ENCODE measurements at regions of chr13 and their contacts with region 1.

Region 1: DNA sequence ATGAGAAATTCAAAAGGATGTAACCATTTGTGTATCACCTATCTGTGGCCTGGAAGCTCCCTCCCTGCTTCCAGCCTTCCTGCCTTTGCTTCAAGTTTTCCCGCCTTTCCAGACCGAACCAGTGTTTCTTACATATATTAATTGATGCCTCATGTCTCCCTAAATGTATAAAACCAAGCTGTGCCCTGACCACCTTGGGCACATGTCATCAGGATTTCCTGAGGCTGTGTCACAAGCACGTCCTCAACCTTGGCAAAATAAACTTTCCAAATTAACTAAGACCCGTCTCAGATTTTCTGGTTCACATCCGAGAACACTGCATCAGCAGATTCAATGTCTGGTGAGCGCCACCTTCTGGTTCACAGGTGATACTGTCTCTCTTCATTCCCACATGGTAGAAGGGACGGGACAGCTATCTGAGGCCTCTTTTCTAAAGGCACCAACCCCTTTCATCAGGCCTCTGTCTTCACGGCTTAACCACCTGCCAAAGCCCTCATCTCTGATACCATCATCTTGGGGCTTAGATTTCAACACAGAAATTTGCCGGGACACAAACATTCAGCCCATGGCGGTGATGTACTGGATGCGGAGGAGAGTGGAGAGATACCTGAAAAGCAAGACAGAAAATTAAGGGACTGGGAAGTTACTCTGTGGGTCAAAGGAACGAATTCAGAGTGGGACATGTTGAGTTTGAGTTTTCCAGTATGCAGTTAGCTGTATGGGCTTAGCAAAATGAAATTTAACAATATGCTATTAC is 58.7 kb upstream of the PABPC3 start:
- DNase-seq: peak; percentile 46
- ATAC-seq: peak; percentile 93
- H3K4me3 ChIP-seq: no peak overlapping the region
- H3K27ac ChIP-seq: no peak overlapping the region
- H3K4me1 ChIP-seq: no peaks in the 10 kb centered on the region
- H3K27me3 ChIP-seq: peaks cover 5% of the 10 kb centered on the region
- CTCF ChIP-seq: peak; percentile 83

Region 2: GRCh38 chr13:24802074-24802473 is 235.2 kb before region 1 on chr13:
- CTCF ChIA-PET with region 1: no interaction called
- POLR2A ChIA-PET with region 1: no interaction called
- in situ Hi-C with region 1: no loop called
- intact Hi-C with region 1: no loop called
- DNase-seq: no peak
- ATAC-seq: no peak
- H3K4me3 ChIP-seq: no peak overlapping the region
- H3K27ac ChIP-seq: no peak overlapping the region
- H3K4me1 ChIP-seq: no peaks in the 10 kb centered on the region
- H3K27me3 ChIP-seq: no peaks in the 10 kb centered on the region; the same call in 1 of the 2 replicates
- CTCF ChIP-seq: no peak

Region 3: DNA sequence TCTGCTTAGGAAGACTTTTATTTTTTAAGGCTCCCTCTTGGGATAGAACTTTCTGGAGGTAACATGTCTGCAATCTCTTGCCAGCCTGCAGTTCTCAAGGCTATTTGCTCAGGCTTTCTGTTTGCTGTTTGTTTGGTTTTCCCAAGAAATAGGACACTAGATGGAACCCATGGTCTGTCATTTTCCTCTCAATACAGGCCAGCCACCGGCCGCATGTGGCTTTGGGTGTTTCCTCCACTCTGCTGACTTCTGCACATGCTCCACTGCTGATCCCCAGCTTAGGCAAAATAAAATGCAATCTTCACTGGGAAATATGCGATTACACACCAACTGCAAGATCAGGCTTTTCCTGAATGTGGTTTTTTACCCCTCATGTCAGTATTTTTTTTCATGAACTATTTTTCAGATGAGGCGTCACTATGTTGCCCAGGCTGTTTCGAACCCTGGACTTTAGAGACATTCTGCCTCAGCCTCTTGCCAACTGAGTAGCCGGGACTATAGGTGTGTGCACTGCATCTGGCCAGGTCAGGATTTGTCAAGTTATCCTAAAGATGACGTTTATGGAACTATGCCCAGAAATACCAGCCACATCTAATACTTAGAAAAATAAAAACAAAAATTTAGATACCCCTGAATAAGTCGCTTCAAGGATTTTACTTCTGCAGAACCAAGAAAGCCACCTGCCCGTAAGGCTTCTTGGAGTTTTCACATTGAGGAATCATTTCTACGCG is 35.6 kb before region 1 on chr13:
- CTCF ChIA-PET with region 1: interaction called, 5 read pairs
- POLR2A ChIA-PET with region 1: no interaction called
- in situ Hi-C with region 1: no loop called
- intact Hi-C with region 1: loop called (anchors 1 kb)
- DNase-seq: no peak
- ATAC-seq: no peak
- H3K4me3 ChIP-seq: no peak overlapping the region
- H3K27ac ChIP-seq: no peak overlapping the region
- H3K4me1 ChIP-seq: peaks cover 8% of the 10 kb centered on the region
- H3K27me3 ChIP-seq: no peaks in the 10 kb centered on the region
- CTCF ChIP-seq: no peak

Region 4: GRCh38 chr13:25175431-25175830 is 138.2 kb after region 1 on chr13:
- CTCF ChIA-PET with region 1: interaction called, 10 read pairs
- POLR2A ChIA-PET with region 1: no interaction called
- in situ Hi-C with region 1: no loop called
- intact Hi-C with region 1: no loop called
- DNase-seq: no peak
- ATAC-seq: no peak
- H3K4me3 ChIP-seq: no peak overlapping the region
- H3K27ac ChIP-seq: no peak overlapping the region
- H3K4me1 ChIP-seq: no peaks in the 10 kb centered on the region
- H3K27me3 ChIP-seq: peaks cover 3% of the 10 kb centered on the region; the same call in 1 of the 2 replicates
- CTCF ChIP-seq: no peak

Measured in Panc1 (cell line).